A549 (cell line): ENCODE measurements at regions of chr9 and their contacts with region 1.

Region 1: GRCh38 chr9:72292256-72292682 is 72.7 kb downstream of the ZFAND5 start:
- DNase-seq: peak; percentile 68 to 81
- ATAC-seq: peak; percentile 61 to 65
- H3K4me3 ChIP-seq: peak overlapping the region; percentile 5; the same call in 1 of the 3 replicates
- H3K27ac ChIP-seq: peak overlapping the region; percentile 95 to 97
- H3K4me1 ChIP-seq: peaks cover 39% of the 10 kb centered on the region
- CTCF ChIP-seq: peak; percentile 80
- EP300 ChIP-seq: no peak
- POLR2A ChIP-seq: no peak
- RAD21 ChIP-seq: peak; percentile 79 to 87

Region 2: DNA sequence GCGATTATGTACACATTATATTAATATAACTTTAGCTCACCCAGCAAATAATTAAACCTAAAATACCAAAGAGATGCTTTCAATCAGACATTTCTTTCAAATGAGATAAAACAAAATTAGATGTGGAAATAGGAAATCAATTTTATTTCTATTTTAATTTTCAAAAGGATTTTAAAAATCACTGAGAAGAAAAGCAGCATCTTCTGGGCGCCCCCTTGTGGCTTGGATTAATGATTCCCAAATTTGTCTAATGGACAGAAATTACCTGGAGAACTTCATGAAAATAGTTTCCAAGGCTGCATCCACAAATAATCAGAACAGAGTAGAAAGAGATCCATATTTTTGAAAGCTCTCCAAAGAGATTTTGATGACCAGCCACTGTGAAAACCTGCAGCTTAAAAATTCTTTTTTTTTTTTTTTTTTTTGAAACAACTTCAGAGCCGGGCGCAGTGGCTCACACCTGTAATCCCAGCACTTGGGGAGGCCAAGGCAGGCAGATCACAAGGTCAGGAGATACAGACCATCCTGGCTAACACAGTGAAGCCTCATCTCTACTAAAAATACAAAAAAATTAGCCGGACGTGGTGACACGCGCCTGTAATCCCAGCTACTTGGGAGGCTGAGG is 473.0 kb before region 1 on chr9:
- CTCF ChIA-PET with region 1: no interaction called
- POLR2A ChIA-PET with region 1: no interaction called
- DNase-seq: peak; percentile 21 to 37
- ATAC-seq: no peak
- H3K4me3 ChIP-seq: no peak overlapping the region
- H3K27ac ChIP-seq: no peak overlapping the region
- H3K4me1 ChIP-seq: peaks cover 9% of the 10 kb centered on the region; the same call in 1 of the 3 replicates
- CTCF ChIP-seq: peak; percentile 91
- EP300 ChIP-seq: no peak
- POLR2A ChIP-seq: no peak
- RAD21 ChIP-seq: peak; percentile 75 to 79

Region 3: GRCh38 chr9:72305102-72305546 is 12.9 kb after region 1 on chr9:
- CTCF ChIA-PET with region 1: interaction called, 5 read pairs
- POLR2A ChIA-PET with region 1: interaction called, 60 read pairs
- DNase-seq: peak; percentile 97 to 99
- ATAC-seq: peak; percentile 100
- H3K4me3 ChIP-seq: peak overlapping the region; percentile 51
- H3K27ac ChIP-seq: peak overlapping the region; percentile 87 to 90
- H3K4me1 ChIP-seq: peaks cover 31% of the 10 kb centered on the region
- CTCF ChIP-seq: no peak
- EP300 ChIP-seq: no peak
- POLR2A ChIP-seq: peak; percentile 61
- RAD21 ChIP-seq: no peak; a peak in 1 of 5 replicates

Region 4: GRCh38 chr9:72315510-72316311 is 23.4 kb after region 1 on chr9:
- CTCF ChIA-PET with region 1: interaction called, 17 read pairs
- POLR2A ChIA-PET with region 1: interaction called, 11 read pairs
- DNase-seq: peak; percentile 40 to 91
- ATAC-seq: peak; percentile 87 to 91
- H3K4me3 ChIP-seq: peak overlapping the region; percentile 22; the same call in 2 of the 3 replicates
- H3K27ac ChIP-seq: peak overlapping the region; percentile 87 to 90
- H3K4me1 ChIP-seq: peaks cover 51% of the 10 kb centered on the region
- CTCF ChIP-seq: no peak
- EP300 ChIP-seq: peak; percentile 34 to 61; a peak in 3 of 5 replicates
- POLR2A ChIP-seq: no peak
- RAD21 ChIP-seq: no peak; a peak in 1 of 5 replicates

Region 5: GRCh38 chr9:72356041-72356582 is 63.8 kb after region 1 on chr9:
- CTCF ChIA-PET with region 1: interaction called, 4 read pairs
- POLR2A ChIA-PET with region 1: interaction called, 10 read pairs
- DNase-seq: peak in 1 of 2 experiments; percentile 46
- ATAC-seq: no peak
- H3K4me3 ChIP-seq: peak overlapping the region; percentile 91; the same call in 1 of the 3 replicates
- H3K27ac ChIP-seq: peak overlapping the region; percentile 16 to 56; a peak in 4 of 6 replicates
- H3K4me1 ChIP-seq: peaks cover 100% of the 10 kb centered on the region
- CTCF ChIP-seq: no peak
- EP300 ChIP-seq: no peak
- POLR2A ChIP-seq: no peak
- RAD21 ChIP-seq: no peak

Region 6: GRCh38 chr9:72592502-72593403 is 300.5 kb after region 1 on chr9:
- CTCF ChIA-PET with region 1: interaction called, 28 read pairs
- POLR2A ChIA-PET with region 1: no interaction called
- DNase-seq: peak; percentile 38 to 78
- ATAC-seq: peak; percentile 81 to 88
- H3K4me3 ChIP-seq: no peak overlapping the region
- H3K27ac ChIP-seq: peak overlapping the region; percentile 67 to 82
- H3K4me1 ChIP-seq: peaks cover 26% of the 10 kb centered on the region
- CTCF ChIP-seq: peak; percentile 92
- EP300 ChIP-seq: no peak
- POLR2A ChIP-seq: no peak
- RAD21 ChIP-seq: peak; percentile 90 to 91

Region 7: DNA sequence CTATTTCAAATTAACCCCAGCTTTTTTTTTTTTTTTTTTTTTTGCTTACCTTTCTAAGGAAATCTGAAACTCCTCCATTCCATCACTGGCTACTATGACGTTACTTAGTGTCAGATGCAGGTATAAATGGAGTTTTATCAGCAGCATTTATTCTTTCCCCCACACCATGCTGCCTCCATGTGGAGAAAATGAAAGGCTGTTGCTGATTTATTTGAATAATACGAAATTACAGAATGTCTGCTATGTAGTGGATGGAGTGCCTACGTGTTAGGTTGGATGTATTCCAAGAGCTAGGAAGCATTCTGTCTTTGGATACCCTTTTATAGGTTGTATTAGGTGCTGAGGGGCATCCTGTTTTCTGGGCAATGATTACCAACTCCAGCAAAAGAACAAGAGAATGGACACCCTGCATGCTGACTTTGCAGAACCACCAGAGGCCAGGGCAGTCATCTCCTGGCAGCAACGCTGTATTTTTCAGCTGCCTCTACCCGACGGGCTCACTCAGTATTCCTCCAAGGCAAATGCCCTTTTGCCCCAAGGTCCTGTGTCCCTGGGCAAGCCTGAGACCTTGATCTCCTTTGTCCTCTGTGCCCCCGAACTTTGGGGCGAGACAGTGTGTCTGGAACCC is 461.1 kb after region 1 on chr9:
- CTCF ChIA-PET with region 1: interaction called, 20 read pairs
- POLR2A ChIA-PET with region 1: no interaction called
- DNase-seq: peak; percentile 13 to 56
- ATAC-seq: peak; percentile 47 to 79; a peak in 5 of 6 replicates
- H3K4me3 ChIP-seq: no peak overlapping the region
- H3K27ac ChIP-seq: peak overlapping the region; percentile 12 to 20; a peak in 3 of 6 replicates
- H3K4me1 ChIP-seq: 0 out of 3 replicates have a peak, but pooled peaks cover 2% of the 10 kb centered on the region
- CTCF ChIP-seq: peak; percentile 65
- EP300 ChIP-seq: no peak
- POLR2A ChIP-seq: no peak
- RAD21 ChIP-seq: peak; percentile 74 to 78

Region 8: DNA sequence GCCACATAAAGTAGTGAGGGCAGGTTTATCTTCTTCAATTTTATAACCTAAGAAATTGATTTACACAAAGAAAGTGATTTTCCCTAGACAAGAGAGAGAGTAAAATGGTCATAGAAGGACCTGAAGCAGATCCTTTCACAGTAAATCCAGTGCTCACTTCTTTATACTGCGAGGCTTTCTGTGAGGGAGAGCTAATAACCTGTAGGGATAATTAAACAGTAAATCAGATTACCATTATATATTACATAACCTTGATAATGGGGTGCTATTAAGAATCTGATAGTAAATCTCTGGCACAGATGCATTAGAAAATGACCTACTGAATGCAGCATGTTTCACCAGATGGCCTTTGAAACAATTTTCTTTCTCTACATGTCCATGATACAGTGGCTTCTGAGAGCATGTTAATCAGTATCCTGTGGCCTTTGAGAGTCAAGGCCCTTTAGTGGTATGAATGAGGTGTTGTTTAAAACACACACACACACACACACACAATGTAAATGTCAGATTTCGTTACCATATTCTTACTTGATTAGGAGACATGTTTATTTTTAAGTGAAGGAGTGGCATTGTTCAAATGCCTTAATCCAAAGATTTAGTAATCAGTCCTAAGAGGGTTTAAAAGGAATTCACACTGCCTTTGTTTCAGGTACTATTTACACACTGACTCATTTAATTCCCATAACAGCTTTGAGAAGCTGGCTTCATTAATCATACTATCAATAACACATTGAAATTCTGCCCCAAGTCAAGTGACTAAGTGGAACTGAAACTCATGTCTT is 535.9 kb after region 1 on chr9:
- CTCF ChIA-PET with region 1: interaction called, 41 read pairs
- POLR2A ChIA-PET with region 1: no interaction called
- DNase-seq: peak; percentile 44 to 86
- ATAC-seq: peak; percentile 82 to 84
- H3K4me3 ChIP-seq: no peak overlapping the region
- H3K27ac ChIP-seq: peak overlapping the region; percentile 77 to 87
- H3K4me1 ChIP-seq: peaks cover 47% of the 10 kb centered on the region
- CTCF ChIP-seq: no peak
- EP300 ChIP-seq: peak; percentile 70 to 84; a peak in 3 of 5 replicates
- POLR2A ChIP-seq: no peak
- RAD21 ChIP-seq: peak in 1 of 2 experiments; percentile 14; a peak in 1 of 5 replicates